Posterior vena cava (tissue), 2 donors: ENCODE measurements at regions of chr21 and their contacts with region 1.

Region 1: DNA sequence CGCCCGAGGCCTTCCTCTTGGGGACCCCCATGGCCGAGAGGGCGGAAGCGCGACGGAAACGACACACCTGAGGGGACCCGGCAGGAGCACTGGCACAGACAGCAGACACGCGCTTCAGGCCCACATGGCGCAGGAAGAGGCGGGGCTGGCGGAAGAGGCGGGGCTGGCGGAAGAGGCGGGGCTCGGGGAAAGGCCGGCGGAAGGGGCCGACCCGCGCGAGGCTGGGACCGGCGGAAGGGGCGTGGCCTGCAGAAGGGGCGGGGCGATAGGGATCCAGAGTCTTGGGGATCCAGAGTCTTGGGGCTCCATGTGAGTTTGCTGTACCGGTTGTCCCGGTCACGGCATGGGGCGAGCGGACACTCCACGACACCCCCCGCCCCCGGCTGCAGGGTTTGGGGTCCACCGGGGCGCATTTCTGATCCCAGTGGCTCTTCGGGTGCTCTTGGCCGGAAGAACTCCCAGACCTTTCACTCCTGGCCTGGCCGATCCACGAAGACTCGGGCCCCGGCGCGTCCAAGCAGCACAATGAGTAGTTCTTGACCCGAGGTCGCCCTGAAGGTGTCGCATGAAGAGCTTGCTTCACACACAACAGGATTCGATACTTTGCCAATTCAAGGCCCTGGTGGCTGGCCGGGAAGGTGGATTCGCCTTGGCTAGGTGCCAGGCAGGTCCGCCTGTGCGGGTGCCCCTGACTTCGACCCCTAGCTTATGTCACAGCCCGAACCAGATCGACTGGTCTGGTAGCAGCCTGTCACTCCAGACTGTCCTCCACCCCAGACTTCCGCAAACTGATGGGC is at the start of gene URB1:
- DNase-seq: peak; percentile 98
- total RNA-seq, gene URB1: 14.1 to 17.6 TPM

Region 2: GRCh38 chr21:32336711-32337110 is 56.4 kb before region 1 on chr21:
- intact Hi-C with region 1: no loop called
- DNase-seq: no peak

Region 3: DNA sequence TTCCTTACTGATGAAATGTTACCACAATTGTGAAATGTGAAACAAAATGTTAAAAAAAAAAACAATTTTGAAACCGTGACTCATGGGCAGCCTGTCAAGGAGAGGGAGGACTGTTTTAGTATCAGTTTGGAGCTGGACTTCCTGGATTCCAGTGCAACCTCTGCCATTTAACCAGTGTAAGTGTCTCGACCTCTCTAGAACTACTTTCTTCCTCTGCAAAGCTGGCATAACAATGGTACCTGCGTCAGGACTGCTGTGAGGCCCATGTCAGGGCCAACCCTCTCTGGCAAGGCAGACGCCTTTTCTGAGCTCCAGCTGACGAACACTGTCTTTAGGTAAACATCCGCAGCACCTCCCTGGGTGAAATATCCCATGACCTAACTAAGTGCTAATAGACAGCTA is 21.2 kb before region 1 on chr21:
- intact Hi-C with region 1: no loop called
- DNase-seq: no peak

Region 4: GRCh38 chr21:32538147-32538792 is 145.2 kb after region 1 on chr21:
- intact Hi-C with region 1: no loop called
- DNase-seq: no peak

Region 5: GRCh38 chr21:32605469-32605868 is 212.4 kb after region 1 on chr21:
- intact Hi-C with region 1: loop called in 1 of 2 experiments (anchors 5 kb)
- DNase-seq: no peak